ENCODE measurements at regions of chr13 and their contacts with region 1.

Region 1: DNA sequence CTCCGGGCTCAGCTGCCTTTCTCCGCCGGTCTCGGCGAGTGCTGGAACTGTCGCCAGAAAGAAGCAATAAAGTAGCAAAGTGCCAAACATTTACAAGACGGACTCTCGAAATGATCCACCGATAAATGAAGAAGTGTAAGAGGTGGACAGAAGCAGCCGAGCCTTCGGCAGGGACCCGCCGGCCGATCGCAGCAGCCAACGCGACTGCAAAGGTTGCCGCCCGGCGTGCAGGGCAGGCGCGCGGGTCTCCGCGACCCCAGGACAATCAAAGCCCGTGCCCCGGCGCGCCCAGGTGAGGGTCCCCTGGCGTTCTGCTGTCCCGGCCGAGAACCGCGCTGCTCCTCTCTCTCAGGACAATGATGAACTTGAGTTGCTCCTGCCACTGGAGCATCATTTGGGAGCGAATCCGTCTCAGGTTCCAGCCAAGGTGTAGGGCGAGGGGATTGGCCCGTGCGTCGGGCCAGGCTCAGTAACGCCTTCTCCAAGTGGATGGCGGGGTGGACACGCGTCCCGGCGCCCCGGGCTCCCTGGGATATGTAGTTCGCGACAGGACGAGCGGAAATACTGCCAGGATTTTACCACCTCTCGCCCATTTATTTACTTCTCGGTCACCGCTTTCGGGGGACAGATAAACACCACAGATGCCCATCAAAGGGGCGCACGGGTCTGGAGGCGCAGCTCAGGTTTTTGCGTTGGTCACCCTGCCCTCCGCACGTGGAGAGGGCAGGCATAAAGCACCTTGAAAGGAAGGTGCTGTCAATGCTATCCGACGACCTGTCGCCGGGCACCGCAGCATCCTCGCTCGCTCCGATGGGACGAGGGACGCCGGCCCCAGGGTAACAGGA is at the starts of genes BIVM and POGLUT2:
- DNase-seq: peak; percentile 85 to 97 (median 92)

Region 2: GRCh38 chr13:102845630-102846260 is 46.9 kb after region 1 on chr13 and contains the start of gene ERCC5:
- intact Hi-C with region 1: loop called (anchors 2 kb)
- DNase-seq: peak; percentile 82 to 97 (median 93)